HEK293 (cell line): ENCODE measurements at regions of chr9 and their contacts with region 1.

Region 1: DNA sequence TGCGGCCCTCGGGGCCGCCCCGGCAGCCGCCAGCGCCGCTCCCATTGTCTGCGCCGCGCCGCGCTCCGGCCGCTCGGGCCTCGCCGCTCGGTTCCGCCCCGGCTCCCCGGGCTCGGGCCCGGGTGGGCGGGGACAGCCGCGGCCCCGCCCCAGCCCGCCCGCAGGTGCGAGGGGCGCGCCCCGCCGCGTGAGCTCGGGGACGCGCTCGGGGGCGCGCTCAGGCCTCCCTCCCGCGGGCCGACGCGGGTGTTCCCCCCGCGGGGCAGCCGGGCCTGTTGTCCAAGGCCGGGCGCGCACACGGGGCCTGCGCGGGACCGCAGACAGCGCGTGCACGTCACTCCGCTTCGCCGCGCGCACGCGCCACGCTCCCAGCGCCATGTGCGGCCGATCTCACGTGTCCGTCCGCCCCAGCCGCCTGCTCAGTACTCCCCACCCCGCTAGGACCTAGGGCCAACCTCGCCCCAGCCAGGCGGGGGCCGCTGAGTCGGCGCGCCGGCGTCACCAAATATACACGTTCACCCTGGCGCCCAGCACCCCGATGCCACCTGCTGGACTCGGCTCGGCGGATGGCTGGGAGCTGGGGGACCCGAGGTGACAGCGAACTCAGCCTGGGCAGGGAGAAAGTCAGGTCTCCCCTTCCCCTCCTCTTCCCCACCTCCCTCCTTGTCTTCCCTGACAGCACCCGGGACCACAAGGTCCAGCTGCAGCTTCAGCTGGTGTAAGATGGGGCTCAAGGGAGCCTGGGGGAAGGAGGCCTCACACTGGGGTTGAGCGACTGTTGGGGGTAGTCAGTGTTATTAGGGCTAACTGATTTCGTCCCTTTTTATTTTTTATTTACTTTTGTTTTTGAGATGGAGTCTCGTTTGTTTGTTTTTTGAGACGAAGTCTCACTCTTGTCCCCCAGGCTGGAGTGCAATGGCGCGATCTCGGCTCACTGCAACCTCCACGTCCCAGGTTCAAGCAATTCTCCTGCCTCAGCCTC is 14.3 kb downstream of the GBGT1 start:
- H3K4me3 ChIP-seq: peak overlapping the region; percentile 64
- H3K27ac ChIP-seq: peak overlapping the region; percentile 89
- H3K4me1 ChIP-seq: 0 out of 2 replicates have a peak, but pooled peaks cover 3% of the 10 kb centered on the region
- CTCF ChIP-seq: peak; percentile 96

Region 2: DNA sequence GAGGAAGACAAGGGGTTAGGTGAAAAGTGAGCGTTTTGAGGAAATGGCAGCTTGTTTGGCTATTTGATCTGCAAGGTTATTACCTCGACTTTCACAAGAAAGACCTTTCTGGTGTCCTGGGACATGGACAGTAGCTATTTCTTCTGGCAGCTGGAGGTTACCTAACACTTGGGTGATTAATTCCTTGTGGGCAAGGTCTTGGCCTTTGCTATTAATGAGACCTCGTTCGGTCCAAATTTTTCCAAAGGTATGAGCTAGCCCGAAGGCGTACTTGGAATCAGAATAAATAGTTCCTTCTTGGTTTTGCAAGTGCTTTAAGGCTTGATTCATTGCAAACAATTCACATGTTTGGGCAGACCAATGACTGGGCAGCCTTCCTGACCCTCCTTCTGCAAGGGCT is 113.7 kb before region 1 on chr9:
- CTCF ChIA-PET with region 1: interaction called, 117 read pairs
- POLR2A ChIA-PET with region 1: interaction called, 26 read pairs
- H3K4me3 ChIP-seq: no peak overlapping the region
- H3K27ac ChIP-seq: no peak overlapping the region
- H3K4me1 ChIP-seq: no peaks in the 10 kb centered on the region
- CTCF ChIP-seq: no peak

Region 3: DNA sequence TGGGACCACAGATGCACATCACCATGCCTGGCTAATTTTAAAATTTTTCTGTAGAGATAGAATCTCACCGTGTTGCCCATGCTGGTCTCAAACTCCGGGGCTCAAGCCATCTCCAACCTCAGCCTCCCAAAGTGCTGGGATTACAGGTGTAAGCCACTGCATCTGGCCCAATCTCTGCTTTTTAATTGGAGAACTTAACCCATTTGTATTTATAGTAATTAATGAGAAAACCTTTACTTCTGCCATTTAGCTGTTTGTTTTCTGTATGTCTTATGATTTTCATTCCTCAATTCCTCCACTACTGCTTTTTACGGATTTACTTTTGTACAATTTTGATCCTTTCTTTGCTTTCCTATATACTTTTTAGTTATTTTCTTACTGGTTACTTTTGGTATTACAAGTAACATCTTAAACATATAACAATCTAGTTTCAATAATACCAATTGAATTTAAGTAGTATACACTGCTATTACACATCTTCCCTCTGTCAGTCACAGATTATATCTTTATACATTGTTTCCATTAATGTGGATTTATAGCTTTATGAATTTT is 54.5 kb before region 1 on chr9:
- CTCF ChIA-PET with region 1: interaction called, 342 read pairs
- POLR2A ChIA-PET with region 1: no interaction called
- H3K4me3 ChIP-seq: no peak overlapping the region
- H3K27ac ChIP-seq: no peak overlapping the region
- H3K4me1 ChIP-seq: no peaks in the 10 kb centered on the region
- CTCF ChIP-seq: no peak

Region 4: DNA sequence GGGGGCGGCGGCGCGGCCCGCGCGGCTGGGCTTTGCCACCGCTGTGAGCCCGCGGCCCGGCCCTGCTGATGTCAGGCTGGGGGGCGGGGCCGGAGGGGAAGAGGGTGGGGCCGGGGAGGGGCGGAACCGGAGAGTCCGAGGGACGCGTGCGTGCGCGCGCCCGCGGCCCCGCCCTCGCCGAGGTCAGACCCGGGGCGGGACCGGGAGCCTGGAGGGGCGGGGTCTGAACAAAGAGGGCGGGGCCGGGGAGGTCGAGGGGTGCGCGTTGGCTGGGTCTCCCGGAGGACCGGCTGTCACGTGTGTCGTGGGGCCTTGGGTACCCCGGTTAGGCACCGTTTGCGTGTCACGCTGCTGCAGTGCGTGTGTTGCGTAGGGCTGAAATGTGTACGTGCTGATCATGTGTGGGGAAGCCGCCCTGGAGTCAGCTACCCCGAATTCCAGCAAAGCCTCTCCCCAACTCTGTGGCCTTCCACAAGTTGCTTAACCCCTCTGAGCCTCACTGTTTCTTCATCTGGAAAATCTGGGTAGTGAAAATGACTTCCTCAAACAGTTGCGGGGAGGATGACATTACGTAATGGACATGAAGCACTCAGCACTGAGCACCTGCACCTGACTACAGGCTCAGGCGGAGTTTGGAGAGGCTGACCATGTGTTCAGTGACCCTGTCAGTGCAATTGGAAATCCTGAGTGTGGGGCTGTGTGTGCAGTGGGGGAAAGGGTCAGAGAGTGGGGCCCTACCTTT is 28.0 kb before region 1 on chr9 and contains the start of gene RALGDS:
- CTCF ChIA-PET with region 1: interaction called, 342 read pairs
- POLR2A ChIA-PET with region 1: interaction called, 9 read pairs
- H3K4me3 ChIP-seq: peak within 1 kb of the TSS; percentile 66
- H3K27ac ChIP-seq: peak within 1 kb of the TSS; percentile 74; the same call in 1 of the 2 replicates
- H3K4me1 ChIP-seq: peaks cover 5% of the 10 kb centered on the region; the same call in 1 of the 2 replicates
- CTCF ChIP-seq: no peak

Region 5: GRCh38 chr9:133160742-133161546 is 11.5 kb after region 1 on chr9:
- CTCF ChIA-PET with region 1: interaction called, 42 read pairs
- POLR2A ChIA-PET with region 1: interaction called, 5 read pairs
- H3K4me3 ChIP-seq: no peak overlapping the region
- H3K27ac ChIP-seq: no peak overlapping the region
- H3K4me1 ChIP-seq: no peaks in the 10 kb centered on the region
- CTCF ChIP-seq: peak; percentile 59; the same call in 1 of the 2 replicates

Region 6: GRCh38 chr9:133221177-133221809 is 71.9 kb after region 1 on chr9:
- CTCF ChIA-PET with region 1: no interaction called
- POLR2A ChIA-PET with region 1: no interaction called
- H3K4me3 ChIP-seq: no peak overlapping the region
- H3K27ac ChIP-seq: no peak overlapping the region
- H3K4me1 ChIP-seq: no peaks in the 10 kb centered on the region
- CTCF ChIP-seq: no peak

Region 7: GRCh38 chr9:133315997-133316396 is 166.6 kb after region 1 on chr9:
- CTCF ChIA-PET with region 1: no interaction called
- POLR2A ChIA-PET with region 1: no interaction called
- H3K4me3 ChIP-seq: no peak overlapping the region
- H3K27ac ChIP-seq: no peak overlapping the region
- H3K4me1 ChIP-seq: no peaks in the 10 kb centered on the region
- CTCF ChIP-seq: no peak